MCF 10A (cell line): ENCODE measurements at regions of chr14 and their contacts with region 1.

Region 1: GRCh38 chr14:32076278-32077080 is 625 bp upstream of the ARHGAP5 start:
- DNase-seq: peak; percentile 97
- H3K4me3 Mint-ChIP-seq: peak overlapping the region; percentile 98
- H3K27ac Mint-ChIP-seq: peak overlapping the region; percentile 96
- H3K4me1 Mint-ChIP-seq: peaks cover 31% of the 10 kb centered on the region
- H3K27me3 Mint-ChIP-seq: no peaks in the 10 kb centered on the region
- CTCF ChIP-seq: no peak

Region 2: DNA sequence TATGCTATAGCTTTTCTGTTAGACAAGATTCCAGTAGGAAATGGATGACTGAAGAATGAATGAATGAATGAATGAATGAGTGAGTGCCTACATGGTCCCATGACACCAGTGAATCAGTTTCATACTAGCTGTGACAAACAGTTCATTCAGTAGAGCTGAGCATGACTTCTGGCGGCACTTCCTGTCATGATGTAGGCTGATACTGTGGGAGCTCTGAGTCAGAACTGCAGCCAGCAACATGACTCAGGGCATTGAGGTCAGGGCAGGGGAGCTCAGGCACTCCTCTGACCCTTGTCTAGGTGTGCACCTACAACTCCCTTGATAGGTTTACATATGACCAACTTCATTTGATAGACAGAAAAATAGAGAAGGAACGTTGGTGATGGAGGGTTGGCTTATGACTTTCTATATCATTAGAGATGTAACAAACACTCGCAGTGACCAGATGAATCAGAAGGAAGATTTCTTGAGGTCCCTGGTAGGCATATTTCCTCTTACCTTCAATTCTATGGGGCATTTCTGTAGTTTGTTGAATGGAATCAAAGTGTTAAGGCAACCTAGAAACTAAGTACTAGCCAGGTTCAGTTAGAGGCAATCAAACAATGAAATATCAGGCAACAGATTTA is 138.6 kb before region 1 on chr14:
- CTCF ChIA-PET with region 1: interaction called, 23 read pairs
- POLR2A ChIA-PET with region 1: interaction called, 74 read pairs
- intact Hi-C with region 1: loop called (anchors 1 kb)
- DNase-seq: peak; percentile 87
- H3K4me3 Mint-ChIP-seq: no peak overlapping the region
- H3K27ac Mint-ChIP-seq: peak overlapping the region; percentile 83
- H3K4me1 Mint-ChIP-seq: peaks cover 28% of the 10 kb centered on the region
- H3K27me3 Mint-ChIP-seq: no peaks in the 10 kb centered on the region
- CTCF ChIP-seq: no peak

Region 3: DNA sequence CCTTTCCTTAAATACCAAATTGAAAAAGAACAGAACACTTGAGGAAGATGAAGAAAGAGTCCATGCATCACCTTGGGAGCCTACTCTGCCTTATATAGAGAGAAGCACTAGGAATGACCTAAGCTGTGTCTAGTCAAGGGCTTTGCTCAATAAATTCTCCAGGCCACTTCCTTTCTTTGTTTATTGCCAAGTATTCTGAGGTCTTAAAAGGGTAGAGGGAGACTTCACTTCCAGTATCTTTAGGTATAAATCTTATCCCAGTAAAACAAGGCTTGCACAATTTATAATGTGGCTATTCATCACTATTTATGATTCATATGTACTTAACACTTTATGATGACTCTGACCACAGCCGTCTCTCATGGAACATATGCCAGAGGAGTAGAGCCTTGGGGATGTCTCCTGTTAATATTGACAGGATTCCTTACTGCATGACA is 84.5 kb before region 1 on chr14:
- CTCF ChIA-PET with region 1: no interaction called
- POLR2A ChIA-PET with region 1: interaction called, 17 read pairs
- intact Hi-C with region 1: loop called (anchors 5 kb)
- DNase-seq: peak; percentile 90
- H3K4me3 Mint-ChIP-seq: no peak overlapping the region
- H3K27ac Mint-ChIP-seq: peak overlapping the region; percentile 54
- H3K4me1 Mint-ChIP-seq: peaks cover 62% of the 10 kb centered on the region
- H3K27me3 Mint-ChIP-seq: no peaks in the 10 kb centered on the region
- CTCF ChIP-seq: no peak

Region 4: GRCh38 chr14:32028599-32028998 is 47.9 kb before region 1 on chr14:
- CTCF ChIA-PET with region 1: interaction called, 10 read pairs
- POLR2A ChIA-PET with region 1: interaction called, 107 read pairs
- intact Hi-C with region 1: no loop called
- DNase-seq: peak; percentile 54
- H3K4me3 Mint-ChIP-seq: no peak overlapping the region
- H3K27ac Mint-ChIP-seq: peak overlapping the region; percentile 90
- H3K4me1 Mint-ChIP-seq: peaks cover 28% of the 10 kb centered on the region
- H3K27me3 Mint-ChIP-seq: no peaks in the 10 kb centered on the region
- CTCF ChIP-seq: no peak

Region 5: GRCh38 chr14:32230695-32231280 is 154.3 kb after region 1 on chr14:
- CTCF ChIA-PET with region 1: no interaction called
- POLR2A ChIA-PET with region 1: interaction called, 8 read pairs
- intact Hi-C with region 1: loop called (anchors 5 kb)
- DNase-seq: peak; percentile 14
- H3K4me3 Mint-ChIP-seq: no peak overlapping the region
- H3K27ac Mint-ChIP-seq: peak overlapping the region; percentile 7
- H3K4me1 Mint-ChIP-seq: peaks cover 29% of the 10 kb centered on the region
- H3K27me3 Mint-ChIP-seq: no peaks in the 10 kb centered on the region
- CTCF ChIP-seq: no peak

Region 6: DNA sequence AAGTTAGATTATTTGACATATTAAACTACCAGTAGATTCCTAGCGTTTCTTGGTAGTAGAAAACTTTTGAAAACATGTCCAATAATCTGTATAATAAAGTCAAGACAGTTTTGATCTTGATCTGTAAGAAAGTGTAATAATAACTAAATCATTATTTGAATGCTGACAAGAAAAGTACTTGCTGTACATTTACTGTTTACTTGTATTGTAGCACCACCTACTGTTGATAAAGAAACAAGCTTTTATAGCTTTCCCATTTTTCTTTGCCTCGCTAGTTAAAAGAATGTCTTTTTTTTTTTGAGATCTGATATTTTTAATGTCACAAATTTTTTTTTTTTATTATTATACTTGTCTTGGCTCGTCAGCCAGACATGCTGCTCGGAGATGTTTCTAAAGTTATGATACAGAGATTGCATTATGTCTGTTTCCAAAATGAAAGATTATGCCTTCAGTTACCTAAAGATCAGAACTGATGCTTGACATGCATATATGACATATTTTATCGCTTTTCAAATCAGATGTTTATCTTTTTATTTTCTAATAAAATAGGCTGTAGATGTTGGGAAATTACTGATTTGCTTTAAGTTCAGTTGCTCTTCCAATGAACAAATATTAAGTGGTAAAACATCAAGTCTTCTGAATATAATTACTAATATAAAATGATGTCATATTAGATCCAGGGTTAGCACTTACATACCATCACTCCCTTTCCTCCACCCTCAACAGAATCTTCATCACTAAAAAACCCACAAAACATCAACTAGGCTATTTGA is 393.1 kb after region 1 on chr14:
- CTCF ChIA-PET with region 1: interaction called, 4 read pairs
- POLR2A ChIA-PET with region 1: interaction called, 17 read pairs
- intact Hi-C with region 1: loop called (anchors 1 kb)
- DNase-seq: peak; percentile 50
- H3K4me3 Mint-ChIP-seq: no peak overlapping the region
- H3K27ac Mint-ChIP-seq: peak overlapping the region; percentile 76
- H3K4me1 Mint-ChIP-seq: peaks cover 47% of the 10 kb centered on the region
- H3K27me3 Mint-ChIP-seq: no peaks in the 10 kb centered on the region
- CTCF ChIP-seq: peak; percentile 45